CD8-positive, alpha-beta memory T cell (primary cell): ENCODE measurements at regions of chr2 and their contacts with region 1.

Region 1: GRCh38 chr2:176454893-176455811 is 185.9 kb downstream of the MTX2 start:
- DNase-seq: peak; percentile 52 to 81 (median 66)
- H3K4me3 ChIP-seq: no peak overlapping the region
- H3K4me3 Mint-ChIP-seq: no peak overlapping the region
- H3K27ac ChIP-seq: no peak overlapping the region
- H3K27ac Mint-ChIP-seq: peak overlapping the region in 1 of 8 donors; percentile 32
- H3K4me1 ChIP-seq: no peaks in the 10 kb centered on the region
- H3K4me1 Mint-ChIP-seq: no peaks in the 10 kb centered on the region
- H3K27me3 ChIP-seq: peaks cover 14% of the 10 kb centered on the region
- H3K27me3 Mint-ChIP-seq: peaks cover 29 to 53% of the 10 kb centered on the region in 2 donors

Region 2: DNA sequence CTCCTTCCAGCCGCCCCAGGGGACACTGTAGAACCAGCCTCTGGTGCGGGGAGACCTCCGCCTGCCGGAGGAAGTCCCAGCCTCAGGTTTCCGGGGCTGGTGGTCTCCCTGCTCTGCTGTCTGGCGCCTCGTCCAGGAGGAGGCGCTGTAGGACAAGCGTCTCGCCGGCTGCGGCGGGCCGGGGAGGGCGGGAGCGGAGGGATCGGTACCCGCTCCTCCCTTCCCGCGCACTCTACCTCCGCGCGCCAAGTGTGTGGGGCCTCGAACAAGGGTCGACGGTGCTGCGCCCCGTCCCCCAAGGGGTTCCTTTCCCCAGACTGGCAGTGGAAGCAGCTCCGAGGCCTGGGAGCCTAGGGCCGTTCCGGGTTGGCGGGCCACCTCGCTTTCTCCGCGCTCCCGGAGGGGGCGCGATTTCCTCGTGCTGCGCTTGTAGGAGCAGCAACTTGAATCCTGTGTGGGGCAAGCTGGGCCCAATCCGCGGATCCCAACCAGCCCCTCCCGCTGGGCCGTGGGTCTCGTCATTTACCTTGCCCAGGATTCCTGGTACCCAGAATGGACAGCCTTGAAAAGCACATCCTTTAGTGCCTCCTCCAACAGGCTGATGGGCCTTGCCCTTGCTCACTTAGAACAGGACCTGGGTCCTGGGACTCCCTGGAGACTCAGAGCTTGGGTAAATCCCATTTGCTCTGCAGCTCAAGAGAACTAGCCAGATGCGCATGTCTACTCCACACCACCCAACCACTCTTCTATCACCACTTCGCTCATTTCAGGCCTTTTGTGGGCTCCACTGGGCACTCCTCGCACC is 314.4 kb before region 1 on chr2:
- CTCF ChIA-PET with region 1: interaction called, 19 read pairs
- POLR2A ChIA-PET with region 1: no interaction called
- DNase-seq: peak; percentile 51 to 76 (median 60)
- H3K4me3 ChIP-seq: no peak overlapping the region
- H3K4me3 Mint-ChIP-seq: peak overlapping the region; percentile 12 to 54 (median 33)
- H3K27ac ChIP-seq: no peak overlapping the region
- H3K27ac Mint-ChIP-seq: peak overlapping the region in 2 of 8 donors; percentile 9 to 18
- H3K4me1 ChIP-seq: peaks cover 28% of the 10 kb centered on the region
- H3K4me1 Mint-ChIP-seq: peaks cover 17 to 33% (median 32%) of the 10 kb centered on the region in 3 donors
- H3K27me3 ChIP-seq: peaks cover 85% of the 10 kb centered on the region
- H3K27me3 Mint-ChIP-seq: peaks cover 82 to 91% of the 10 kb centered on the region in 2 donors

Region 3: GRCh38 chr2:176473177-176473576 is 18.0 kb after region 1 on chr2:
- CTCF ChIA-PET with region 1: interaction called, 10 read pairs
- POLR2A ChIA-PET with region 1: no interaction called
- DNase-seq: no peak
- H3K4me3 ChIP-seq: no peak overlapping the region
- H3K4me3 Mint-ChIP-seq: peak overlapping the region in 6 of 7 donors; percentile 52 to 78 (median 73)
- H3K27ac ChIP-seq: no peak overlapping the region
- H3K27ac Mint-ChIP-seq: peak overlapping the region in 5 of 8 donors; percentile 9 to 77 (median 53)
- H3K4me1 ChIP-seq: peaks cover 7% of the 10 kb centered on the region
- H3K4me1 Mint-ChIP-seq: peaks cover 14 to 20% (median 19%) of the 10 kb centered on the region in 3 donors
- H3K27me3 ChIP-seq: no peaks in the 10 kb centered on the region
- H3K27me3 Mint-ChIP-seq: peaks cover 6 to 23% of the 10 kb centered on the region in 2 donors